Activated CD4-positive, alpha-beta T cell treated with anti-CD3 and anti-CD28 coated beads, Interleukin-2, amount 10 ng/mL, durations not matched to agents 24 days and 14 days (primary cell): ENCODE measurements at regions of chr11 and their contacts with region 1.

Region 1: DNA sequence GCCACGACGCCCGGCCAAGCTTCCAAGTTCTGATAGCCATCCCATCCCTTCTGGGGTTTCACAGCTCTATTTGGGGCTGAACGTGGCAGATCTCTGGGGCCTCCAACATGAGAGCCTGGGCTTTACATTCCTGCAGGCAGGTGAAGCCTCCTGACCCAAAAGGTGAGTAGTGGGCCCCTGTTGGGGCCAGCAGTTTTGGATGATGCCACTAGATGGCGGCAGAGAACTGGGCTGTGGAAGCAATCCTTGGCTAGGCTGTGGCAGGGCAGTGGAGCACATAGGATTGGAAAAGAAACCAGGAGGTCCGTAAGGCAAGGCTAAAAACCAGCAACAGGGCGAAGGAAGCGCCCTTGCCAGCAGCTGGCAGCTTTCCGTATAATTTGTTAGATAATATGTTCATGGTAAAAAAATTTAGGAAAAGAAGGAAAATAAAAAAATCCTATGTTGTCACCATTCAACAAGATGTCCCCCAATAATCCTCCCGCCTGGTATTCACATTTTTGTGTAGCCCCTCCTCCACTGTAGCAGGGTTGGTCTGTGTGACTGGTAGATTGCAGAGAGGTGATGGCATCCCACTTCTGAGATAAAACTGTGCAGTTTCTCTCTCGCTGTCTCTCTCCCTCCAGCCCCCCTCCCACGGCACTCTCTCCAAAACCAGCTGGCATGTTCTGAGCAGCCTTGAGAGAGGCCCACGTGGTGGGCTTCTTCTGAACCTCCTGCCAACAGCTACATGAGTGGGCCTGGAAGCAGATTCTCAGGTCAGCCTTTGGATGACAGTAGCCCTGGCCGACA is 43.6 kb upstream of the OR4B1 start:
- DNase-seq: peak; percentile 88
- H3K4me3 Mint-ChIP-seq: no peak overlapping the region
- H3K27ac Mint-ChIP-seq: no peak overlapping the region
- H3K4me1 Mint-ChIP-seq: peaks cover 32% of the 10 kb centered on the region
- H3K27me3 Mint-ChIP-seq: no peaks in the 10 kb centered on the region

Region 2: DNA sequence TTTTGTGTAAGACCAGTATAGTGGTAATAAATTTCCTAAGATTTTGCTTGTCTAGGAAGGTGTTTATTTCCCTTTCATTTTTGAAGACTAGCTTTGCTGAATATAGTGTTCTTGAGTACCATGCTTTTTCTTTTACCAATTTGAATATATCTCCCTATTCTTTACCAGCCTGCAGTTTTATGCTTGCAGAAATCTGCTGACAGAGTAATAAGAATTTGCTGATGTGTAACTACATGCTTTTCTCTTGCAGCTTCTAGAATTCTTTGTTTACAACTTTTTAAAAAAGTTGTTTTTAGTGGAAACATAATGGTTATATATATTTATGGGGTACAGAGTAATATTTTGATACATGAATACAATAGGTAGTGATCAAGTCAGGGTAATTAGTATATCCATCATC is 1360.2 kb after region 1 on chr11:
- intact Hi-C with region 1: loop called (anchors 10 kb)
- DNase-seq: no peak
- H3K4me3 Mint-ChIP-seq: no peak overlapping the region
- H3K27ac Mint-ChIP-seq: no peak overlapping the region
- H3K4me1 Mint-ChIP-seq: no peaks in the 10 kb centered on the region
- H3K27me3 Mint-ChIP-seq: no peaks in the 10 kb centered on the region